Ascending aorta (tissue), 2 donors: ENCODE measurements at regions of chr12 and their contacts with region 1.

Region 1: GRCh38 chr12:13196130-13196921 is at the start of gene EMP1:
- DNase-seq: peak; percentile 89 to 98
- H3K4me3 ChIP-seq: peak within 1 kb of the TSS; percentile 52 to 71
- H3K27ac ChIP-seq: peak within 1 kb of the TSS; percentile 82 to 85
- H3K4me1 ChIP-seq: peaks cover 3 to 7% of the 10 kb centered on the region in 2 donors
- H3K27me3 ChIP-seq: no peaks in the 10 kb centered on the region
- CTCF ChIP-seq: no peak
- total RNA-seq, gene EMP1: 588 TPM

Region 2: DNA sequence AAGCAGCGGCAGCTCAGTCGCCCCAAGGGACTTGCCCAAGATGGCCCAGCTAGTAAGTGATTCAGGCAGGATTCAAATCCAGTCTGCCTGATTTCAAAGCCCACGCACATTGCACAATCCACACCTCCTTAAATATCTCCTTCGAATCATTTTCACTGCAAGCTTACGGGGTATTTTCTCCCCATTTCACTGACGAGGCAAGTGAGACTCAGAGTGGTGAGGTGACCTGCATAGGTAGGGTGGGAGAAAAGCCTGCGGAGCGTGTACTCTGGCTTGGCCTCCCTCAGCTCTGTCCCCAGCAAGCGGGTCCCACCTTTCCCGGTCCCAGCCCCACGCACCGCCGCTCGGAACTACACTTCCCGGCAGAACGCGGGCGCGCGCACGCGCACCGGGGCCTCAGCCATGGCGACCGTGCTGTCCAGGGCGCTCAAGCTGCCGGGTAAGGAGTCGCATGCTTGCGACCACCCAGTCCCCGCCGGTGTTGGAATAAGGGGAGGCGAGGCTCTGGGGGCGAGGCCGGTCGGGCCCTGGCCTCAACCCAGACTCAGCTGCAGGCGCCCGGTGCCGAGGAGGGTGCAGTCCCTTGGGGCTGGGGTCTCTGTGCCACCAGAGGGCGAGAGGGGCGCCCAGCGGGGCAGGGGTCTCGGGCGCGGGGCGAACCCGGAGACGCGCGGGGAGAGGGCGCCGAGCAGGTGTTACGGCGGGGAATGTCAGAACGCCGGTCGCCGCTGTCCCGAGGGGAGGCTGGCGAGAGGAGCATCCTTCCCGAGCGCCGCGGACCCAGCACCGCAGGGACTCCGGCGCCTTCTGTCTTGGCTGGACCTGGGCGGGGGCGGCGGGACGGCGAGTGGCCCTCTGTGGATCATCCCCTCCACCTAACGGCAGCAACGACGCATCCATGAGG is 152.1 kb before region 1 on chr12 and contains the start of gene FAM234B:
- intact Hi-C with region 1: loop called (anchors 5 kb)
- DNase-seq: peak; percentile 14 to 91
- H3K4me3 ChIP-seq: peak within 1 kb of the TSS; percentile 90 to 97
- H3K27ac ChIP-seq: peak within 1 kb of the TSS; percentile 61 to 63
- H3K4me1 ChIP-seq: peaks cover 0 to 6% of the 10 kb centered on the region in 2 donors
- H3K27me3 ChIP-seq: no peaks in the 10 kb centered on the region
- CTCF ChIP-seq: peak in 2 of 3 experiments; percentile 10 to 35
- total RNA-seq, gene FAM234B: 6.7 TPM

Region 3: GRCh38 chr12:13173012-13173932 is 23.1 kb before region 1 on chr12:
- intact Hi-C with region 1: loop called (anchors 2 kb)
- DNase-seq: peak; percentile 41 to 87
- H3K4me3 ChIP-seq: no peak overlapping the region
- H3K27ac ChIP-seq: peak overlapping the region; percentile 20 to 23
- H3K4me1 ChIP-seq: no peaks in the 10 kb centered on the region
- H3K27me3 ChIP-seq: no peaks in the 10 kb centered on the region
- CTCF ChIP-seq: no peak